Natural killer cell (primary cell): ENCODE measurements at regions of chr4 and their contacts with region 1.

Region 1: DNA sequence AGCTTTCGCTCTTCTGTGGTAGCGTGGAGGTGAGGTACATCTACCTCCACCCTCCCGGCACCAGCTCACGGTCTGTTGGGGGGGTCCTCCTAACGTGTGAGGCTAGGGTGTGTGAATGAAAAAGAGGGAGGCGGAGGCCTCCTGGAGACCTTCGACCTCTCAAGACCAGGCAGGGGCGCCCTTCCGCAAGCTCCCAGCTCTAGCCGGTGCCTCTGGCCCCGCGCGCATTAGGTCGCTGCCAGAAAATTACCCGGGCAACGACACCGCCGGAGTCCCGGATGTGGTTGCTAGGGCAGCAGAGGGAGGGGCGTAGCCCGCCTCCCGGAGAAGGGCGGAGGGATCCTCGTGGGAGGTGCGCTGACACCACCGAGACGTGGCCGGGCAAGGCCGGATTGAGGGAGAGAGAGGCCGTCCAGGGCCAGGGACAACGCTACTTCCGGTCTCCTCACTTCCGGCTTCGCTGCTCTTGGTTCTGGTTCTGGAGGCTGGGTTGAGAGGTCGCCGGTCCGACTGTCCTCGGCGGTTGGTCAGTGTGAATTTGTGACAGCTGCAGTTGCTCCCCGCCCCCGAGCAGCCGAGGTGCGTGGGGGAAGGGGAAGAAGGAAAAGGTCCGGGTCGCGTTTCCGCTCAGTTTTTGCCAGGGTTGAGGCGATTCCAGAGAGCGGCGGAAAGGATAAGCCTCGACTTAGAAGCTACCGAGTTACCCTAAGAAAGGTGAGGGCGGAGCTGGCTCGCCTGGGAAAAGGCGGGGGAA is at the starts of genes ARFIP1 and TIGD4:
- DNase-seq: peak; percentile 90 to 96
- ATAC-seq: peak; percentile 86 to 95 (median 90)
- H3K4me3 ChIP-seq: peak within 1 kb of the TSS; percentile 78
- H3K4me3 Mint-ChIP-seq: peak within 1 kb of the TSS; percentile 99
- H3K27ac ChIP-seq: peak within 1 kb of the TSS; percentile 73
- H3K27ac Mint-ChIP-seq: peak within 1 kb of the TSS; percentile 95 to 99
- H3K4me1 ChIP-seq: peaks cover 12% of the 10 kb centered on the region
- H3K4me1 Mint-ChIP-seq: peaks cover 54 to 55% of the 10 kb centered on the region in 2 donors
- H3K27me3 ChIP-seq: no peaks in the 10 kb centered on the region
- H3K27me3 Mint-ChIP-seq: peaks cover 5 to 18% of the 10 kb centered on the region in 2 donors
- CTCF ChIP-seq: no peak
- total RNA-seq, gene ARFIP1: 13.7 to 20.6 (median 14.6) TPM
- total RNA-seq, gene TIGD4: not detected

Region 2: GRCh38 chr4:151760712-151761527 is 1018.8 kb before region 1 on chr4 and contains the start of gene GATB:
- intact Hi-C with region 1: loop called (anchors 5 kb)
- DNase-seq: peak; percentile 79 to 96
- ATAC-seq: peak; percentile 98 to 99 (median 99)
- H3K4me3 ChIP-seq: peak within 1 kb of the TSS; percentile 71
- H3K4me3 Mint-ChIP-seq: peak within 1 kb of the TSS; percentile 100
- H3K27ac ChIP-seq: peak within 1 kb of the TSS; percentile 53
- H3K27ac Mint-ChIP-seq: peak within 1 kb of the TSS; percentile 93 to 96
- H3K4me1 ChIP-seq: peaks cover 10% of the 10 kb centered on the region
- H3K4me1 Mint-ChIP-seq: peaks cover 14 to 15% of the 10 kb centered on the region in 2 donors
- H3K27me3 ChIP-seq: no peaks in the 10 kb centered on the region
- H3K27me3 Mint-ChIP-seq: peaks cover 14 to 26% of the 10 kb centered on the region in 2 donors
- CTCF ChIP-seq: peak; percentile 8
- total RNA-seq, gene GATB: 5.6 to 7.2 (median 6.3) TPM

Region 3: DNA sequence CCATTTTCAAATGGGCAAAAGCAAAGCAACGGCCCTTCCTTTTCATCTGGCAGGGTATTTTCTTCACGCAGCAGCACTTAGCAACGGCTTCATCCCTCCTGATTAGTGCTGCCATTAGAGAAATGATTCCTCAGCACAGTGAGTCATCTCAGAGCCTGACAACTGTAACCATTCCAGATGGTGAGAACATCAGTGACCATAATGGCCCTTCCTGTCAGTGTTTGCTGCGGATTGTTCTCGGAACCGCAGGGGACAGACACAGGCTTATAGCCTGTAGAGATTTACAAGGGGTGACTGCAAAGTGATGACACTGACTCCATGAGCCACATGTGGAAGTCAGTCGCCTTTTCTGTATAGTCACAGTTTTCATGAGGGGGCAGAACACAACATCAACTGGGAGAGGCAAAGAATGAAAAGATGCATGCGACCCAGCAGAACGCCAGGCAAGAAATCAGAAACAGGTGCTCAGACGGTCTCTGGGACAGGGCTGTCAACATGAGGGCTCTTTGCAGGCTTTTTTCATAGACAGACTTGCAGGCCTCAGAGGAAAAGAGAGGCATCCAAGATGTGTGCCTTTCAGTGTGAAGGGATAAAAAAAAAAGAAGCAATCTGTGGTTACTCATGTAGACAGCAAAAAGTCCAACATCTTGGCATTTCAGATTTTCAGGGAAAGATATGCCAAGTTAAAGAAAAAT is 173.9 kb before region 1 on chr4:
- intact Hi-C with region 1: no loop called
- DNase-seq: no peak
- ATAC-seq: no peak
- H3K4me3 ChIP-seq: no peak overlapping the region
- H3K4me3 Mint-ChIP-seq: no peak overlapping the region
- H3K27ac ChIP-seq: no peak overlapping the region
- H3K27ac Mint-ChIP-seq: no peak overlapping the region
- H3K4me1 ChIP-seq: no peaks in the 10 kb centered on the region
- H3K4me1 Mint-ChIP-seq: no peaks in the 10 kb centered on the region
- H3K27me3 ChIP-seq: no peaks in the 10 kb centered on the region
- H3K27me3 Mint-ChIP-seq: peaks cover 5 to 9% of the 10 kb centered on the region in 2 donors
- CTCF ChIP-seq: no peak